ENCODE measurements at regions of chr19 and their contacts with region 1.

Region 1: DNA sequence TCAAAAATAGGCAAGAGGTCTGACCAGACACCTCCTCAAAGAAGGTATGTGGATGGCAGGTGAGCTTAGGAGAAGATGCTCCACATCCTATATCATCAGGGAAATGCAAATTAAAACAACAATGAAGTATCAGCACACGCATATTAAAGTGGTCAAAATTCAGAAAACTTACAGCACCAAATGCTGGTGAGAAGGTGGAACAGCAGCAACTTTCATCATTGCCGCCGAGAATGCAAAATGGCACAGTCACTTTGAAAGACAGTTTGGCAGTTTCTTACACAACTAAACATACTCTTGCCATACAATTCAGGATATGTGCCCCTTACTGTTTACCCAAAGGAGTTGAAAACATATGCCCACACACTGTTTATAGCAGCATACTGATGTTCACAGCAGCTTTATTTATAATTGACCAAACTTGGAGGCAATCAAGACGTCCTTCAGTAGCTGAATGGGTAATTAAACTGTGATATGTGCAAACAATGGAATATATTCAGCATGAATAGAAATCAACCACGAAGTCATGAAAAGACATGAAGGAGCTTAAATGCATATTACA is 22.5 kb downstream of the OR10H4 start:
- DNase-seq: no peak
- ATAC-seq: no peak
- H3K4me3 ChIP-seq: no peak overlapping the region
- H3K4me3 Mint-ChIP-seq: no peak overlapping the region
- H3K27ac ChIP-seq: no peak overlapping the region
- H3K27ac Mint-ChIP-seq: no peak overlapping the region
- H3K4me1 ChIP-seq: no peaks in the 10 kb centered on the region
- H3K4me1 Mint-ChIP-seq: no peaks in the 10 kb centered on the region
- H3K27me3 ChIP-seq: no peaks in the 10 kb centered on the region
- H3K27me3 Mint-ChIP-seq: peaks cover 20% of the 10 kb centered on the region
- CTCF ChIP-seq: no peak

Region 2: GRCh38 chr19:15926484-15926883 is 44.8 kb before region 1 on chr19:
- CTCF ChIA-PET with region 1: no interaction called
- POLR2A ChIA-PET with region 1: no interaction called
- intact Hi-C with region 1: loop called in 1 of 2 experiments (anchors 1 kb)
- DNase-seq: no peak
- ATAC-seq: no peak
- H3K4me3 ChIP-seq: no peak overlapping the region
- H3K4me3 Mint-ChIP-seq: no peak overlapping the region
- H3K27ac ChIP-seq: no peak overlapping the region
- H3K27ac Mint-ChIP-seq: no peak overlapping the region
- H3K4me1 ChIP-seq: no peaks in the 10 kb centered on the region
- H3K4me1 Mint-ChIP-seq: no peaks in the 10 kb centered on the region
- H3K27me3 ChIP-seq: peaks cover 0 to 3% of the 10 kb centered on the region in 2 experiments
- H3K27me3 Mint-ChIP-seq: peaks cover 72% of the 10 kb centered on the region
- CTCF ChIP-seq: no peak

Measured in CD8-positive, alpha-beta T cell (primary cell).